ENCODE measurements at regions of chr14 and their contacts with region 1.

Region 1: DNA sequence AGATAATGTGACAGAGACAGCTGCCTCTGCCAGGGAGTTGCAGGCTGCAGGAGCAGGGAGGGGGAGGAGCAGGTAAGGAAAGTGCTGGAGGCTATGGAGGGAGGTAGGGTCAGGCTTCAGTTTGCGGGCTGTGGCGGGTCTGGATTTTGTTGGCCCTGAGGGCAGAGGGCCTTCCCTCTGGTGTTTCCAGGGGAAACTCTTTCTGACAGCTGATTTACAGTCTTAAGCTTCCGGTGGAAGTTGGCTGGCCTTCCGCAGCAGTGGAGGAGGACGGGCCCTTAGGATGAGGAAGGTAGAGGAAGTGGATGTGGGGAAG is 7.3 kb upstream of the PPP1R13B start:
- DNase-seq: no peak
- ATAC-seq: peak in 2 of 4 donors; percentile 10 to 32
- H3K4me3 ChIP-seq: no peak overlapping the region
- H3K27ac ChIP-seq: no peak overlapping the region
- H3K4me1 ChIP-seq: no peaks in the 10 kb centered on the region
- H3K27me3 ChIP-seq: no peaks in the 10 kb centered on the region
- CTCF ChIP-seq: no peak

Region 2: DNA sequence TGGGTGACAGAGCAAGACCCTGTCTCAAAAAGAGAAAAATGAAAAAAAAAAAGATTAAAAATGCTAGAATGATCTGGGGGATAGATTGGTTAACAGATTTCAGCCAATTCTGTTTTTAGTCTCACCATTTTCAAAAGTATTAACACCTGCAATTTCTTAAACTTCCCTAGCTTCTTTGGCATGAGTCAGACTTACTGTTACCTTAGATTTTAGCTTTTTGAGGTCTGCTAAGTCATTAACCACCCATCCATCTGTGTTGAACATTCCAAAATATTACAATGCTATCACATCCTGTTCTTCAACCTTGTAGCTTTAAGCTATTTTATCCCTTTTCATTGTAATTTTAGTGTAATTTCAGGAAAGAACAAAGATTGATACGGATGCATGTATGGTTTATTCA is 66.6 kb before region 1 on chr14:
- intact Hi-C with region 1: no loop called
- DNase-seq: no peak
- ATAC-seq: no peak
- H3K4me3 ChIP-seq: no peak overlapping the region
- H3K27ac ChIP-seq: no peak overlapping the region
- H3K4me1 ChIP-seq: no peaks in the 10 kb centered on the region
- H3K27me3 ChIP-seq: no peaks in the 10 kb centered on the region
- CTCF ChIP-seq: no peak

Region 3: DNA sequence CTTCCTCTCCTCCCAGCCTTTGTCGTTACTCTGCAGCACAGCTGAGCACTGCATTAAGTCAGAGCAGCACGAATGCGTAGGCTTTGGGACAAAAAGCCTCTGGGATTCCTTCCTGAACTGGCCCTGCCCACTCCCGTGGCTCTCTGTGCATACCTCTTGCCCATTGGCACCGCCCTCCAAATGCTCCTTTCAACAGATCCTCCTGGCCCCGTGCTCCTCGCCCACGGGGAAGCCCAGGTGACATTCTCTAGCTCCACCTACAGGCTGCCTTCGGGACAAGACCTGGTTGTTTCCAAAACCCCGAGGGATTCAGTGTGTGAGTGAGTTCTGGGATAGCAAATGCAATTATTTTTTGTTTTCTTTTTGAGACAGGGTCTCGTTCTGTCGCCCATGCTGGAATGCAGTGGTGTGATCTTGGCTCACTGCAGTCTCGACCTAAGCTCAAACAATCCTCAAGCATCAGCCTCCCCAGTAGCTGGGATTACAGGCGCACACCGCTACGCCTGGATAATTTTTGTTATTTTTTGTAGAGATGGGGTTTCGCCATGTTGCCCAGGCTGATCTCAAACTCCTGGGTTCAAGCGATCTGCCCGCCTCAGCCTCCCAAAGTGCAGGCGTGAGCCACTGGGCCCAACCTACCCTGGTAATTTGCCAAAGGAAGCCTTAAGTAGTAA is 55.7 kb after region 1 on chr14:
- intact Hi-C with region 1: loop called in 1 of 2 experiments (anchors 5 kb)
- DNase-seq: peak; percentile 71 to 81
- ATAC-seq: peak; percentile 93 to 95 (median 94)
- H3K4me3 ChIP-seq: no peak overlapping the region
- H3K27ac ChIP-seq: no peak overlapping the region
- H3K4me1 ChIP-seq: no peaks in the 10 kb centered on the region
- H3K27me3 ChIP-seq: no peaks in the 10 kb centered on the region
- CTCF ChIP-seq: peak; percentile 76

Region 4: DNA sequence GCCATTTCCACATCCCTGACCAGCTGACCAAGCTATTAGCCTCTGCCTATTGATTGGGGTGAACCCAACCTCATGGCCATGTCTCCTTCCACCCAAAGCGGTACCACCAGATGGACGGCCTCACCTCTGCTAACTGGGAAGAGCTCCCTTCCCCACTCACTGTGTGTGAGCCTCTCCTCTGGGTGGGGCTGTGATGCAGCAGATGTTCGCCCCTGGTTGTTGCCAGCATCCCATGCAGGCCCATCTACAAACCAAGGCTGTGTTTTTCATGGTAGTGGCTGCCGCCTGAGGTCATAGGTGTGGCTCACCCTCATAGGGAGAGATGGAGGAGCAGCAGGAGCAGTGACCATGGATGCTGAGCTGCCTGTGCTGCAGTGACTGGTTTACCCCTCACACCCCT is 135.3 kb after region 1 on chr14:
- intact Hi-C with region 1: no loop called
- DNase-seq: no peak
- ATAC-seq: no peak
- H3K4me3 ChIP-seq: no peak overlapping the region
- H3K27ac ChIP-seq: no peak overlapping the region
- H3K4me1 ChIP-seq: no peaks in the 10 kb centered on the region
- H3K27me3 ChIP-seq: peaks cover 0 to 11% (median 0%) of the 10 kb centered on the region in 3 donors
- CTCF ChIP-seq: no peak

Measured in psoas muscle (tissue), 8 donors.